ENCODE measurements at regions of chr10 and their contacts with region 1.

Region 1: DNA sequence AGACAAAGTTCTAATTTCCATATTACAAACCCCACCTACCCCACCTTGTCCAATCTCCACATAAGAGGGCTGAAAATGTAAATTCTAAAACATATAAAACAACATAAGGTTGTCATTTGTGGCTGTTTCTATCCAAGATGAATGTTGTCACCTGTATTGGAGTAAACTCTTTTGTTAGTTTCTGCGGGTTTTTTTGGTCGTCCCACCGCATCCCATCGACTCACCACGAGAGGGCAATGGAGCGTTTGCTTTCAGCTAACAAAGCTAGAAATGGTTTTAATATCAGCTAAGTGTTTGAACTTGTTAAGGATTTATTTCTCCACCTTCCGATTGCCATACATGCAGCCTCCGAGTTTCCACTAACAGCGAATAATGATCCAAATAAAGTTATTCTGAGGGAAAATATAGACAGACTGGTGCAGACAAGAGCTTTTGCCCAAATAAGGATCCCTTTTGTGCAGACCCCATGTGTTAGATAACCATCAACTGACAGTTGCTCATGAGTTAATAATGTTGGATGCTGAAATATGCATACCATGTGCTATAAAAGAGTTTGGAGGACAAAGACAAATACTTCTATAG is 137.2 kb downstream of the ARID5B start:
- DNase-seq: peak in 1 of 2 donors; percentile 85
- H3K4me3 ChIP-seq: peak overlapping the region; percentile 14 to 25
- H3K27ac ChIP-seq: peak overlapping the region; percentile 84 to 90
- H3K4me1 ChIP-seq: peaks cover 12 to 46% of the 10 kb centered on the region in 2 donors
- H3K27me3 ChIP-seq: no peaks in the 10 kb centered on the region
- CTCF ChIP-seq: peak; percentile 74 to 87 (median 81)

Region 2: DNA sequence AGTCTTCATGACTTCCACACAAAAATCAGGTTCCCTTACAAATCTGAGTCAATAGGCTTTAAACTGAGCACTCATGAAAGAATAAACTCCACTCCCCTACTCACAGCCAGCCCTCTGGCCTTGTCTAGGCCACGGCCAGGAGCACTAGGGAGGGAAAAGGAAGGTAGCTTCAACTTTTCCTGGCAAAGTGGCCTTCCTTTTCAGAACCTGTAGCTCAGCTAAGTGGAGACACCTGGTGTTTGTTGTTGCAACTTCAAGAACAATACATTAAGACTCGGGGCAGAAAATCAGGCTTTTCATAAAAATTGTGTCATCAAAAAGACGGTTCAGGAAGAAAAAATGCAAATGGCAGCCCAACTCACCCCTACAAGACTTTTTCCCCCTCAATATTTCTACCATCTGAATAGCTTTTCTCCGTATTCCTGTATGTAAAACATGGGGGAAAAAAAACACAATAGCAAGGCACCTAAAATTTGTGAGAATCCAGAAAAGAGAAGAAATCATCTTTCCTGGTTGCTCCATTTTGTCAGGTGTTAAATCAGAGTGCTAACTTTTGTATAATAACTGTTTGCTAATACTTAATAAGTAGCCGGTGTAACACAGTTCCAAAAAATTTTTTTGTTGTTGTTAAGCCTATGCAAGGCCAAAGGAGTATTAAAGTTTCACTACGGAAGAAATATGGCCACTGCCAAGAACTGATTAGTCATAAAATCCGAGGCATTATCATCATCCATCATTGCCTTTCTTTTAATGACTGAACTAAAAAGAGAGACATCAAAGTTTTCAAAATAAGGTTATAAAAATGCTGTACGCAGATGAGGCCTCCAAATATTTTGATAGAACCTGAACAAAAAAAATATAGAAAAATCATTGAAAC is 203.4 kb before region 1 on chr10:
- intact Hi-C with region 1: loop called (anchors 10 kb)
- DNase-seq: no peak
- H3K4me3 ChIP-seq: no peak overlapping the region
- H3K27ac ChIP-seq: peak overlapping the region; percentile 45 to 71
- H3K4me1 ChIP-seq: peaks cover 3 to 19% of the 10 kb centered on the region in 2 donors
- H3K27me3 ChIP-seq: no peaks in the 10 kb centered on the region
- CTCF ChIP-seq: peak in 1 of 3 experiments; percentile 41

Region 3: DNA sequence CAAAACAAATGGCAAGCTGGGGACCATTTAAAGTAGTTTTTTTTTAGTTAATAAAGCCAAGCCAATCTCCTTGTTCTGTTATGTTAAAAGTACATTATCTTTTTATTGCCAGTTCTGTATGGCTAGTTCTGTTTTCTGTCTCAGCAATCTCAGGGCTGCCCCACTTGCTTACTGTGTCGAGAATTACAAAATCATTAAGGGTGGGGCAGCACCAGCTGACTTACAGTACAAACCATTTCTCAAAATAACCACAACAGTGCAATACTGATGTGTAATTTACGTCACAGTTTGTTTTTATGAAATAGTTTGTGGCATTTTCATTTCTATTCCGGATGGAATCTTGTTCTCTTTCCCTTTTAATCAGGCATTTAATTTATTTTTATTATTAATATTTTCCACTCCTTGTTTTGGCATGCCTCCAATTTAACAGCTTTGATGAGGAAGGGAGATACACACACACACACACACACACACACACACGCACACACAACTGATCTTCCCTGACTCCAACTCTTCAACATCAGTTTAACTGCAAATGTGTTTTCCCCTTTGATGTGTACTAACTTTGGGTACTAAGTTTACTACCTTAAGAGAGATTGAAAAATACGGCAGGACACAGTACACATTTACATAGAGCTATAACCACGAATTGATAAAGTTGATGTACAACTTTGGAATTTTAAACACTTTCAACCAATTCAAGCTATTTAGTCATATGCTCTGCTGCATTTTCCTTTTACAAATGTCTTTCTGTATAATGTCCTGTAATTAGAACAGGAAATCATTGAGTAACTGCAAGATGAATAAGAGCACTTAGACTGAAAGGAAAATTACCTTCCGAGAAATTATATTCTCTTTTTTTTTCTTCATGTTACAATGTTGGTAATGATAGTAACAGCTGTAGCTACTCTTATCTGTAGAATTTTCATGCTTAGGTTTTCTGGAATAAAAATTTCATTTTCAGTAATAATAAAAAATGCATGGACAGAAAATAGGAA is 45.7 kb before region 1 on chr10:
- intact Hi-C with region 1: loop called (anchors 5 kb)
- DNase-seq: peak; percentile 48 to 88
- H3K4me3 ChIP-seq: peak overlapping the region; percentile 34 to 40
- H3K27ac ChIP-seq: peak overlapping the region; percentile 73 to 87
- H3K4me1 ChIP-seq: peaks cover 3 to 54% of the 10 kb centered on the region in 2 donors
- H3K27me3 ChIP-seq: no peaks in the 10 kb centered on the region
- CTCF ChIP-seq: no peak

Region 4: GRCh38 chr10:62019013-62019684 is 19.6 kb before region 1 on chr10:
- intact Hi-C with region 1: loop called (anchors 2 kb)
- DNase-seq: no peak
- H3K4me3 ChIP-seq: peak overlapping the region; percentile 12 to 33
- H3K27ac ChIP-seq: peak overlapping the region; percentile 88 to 91
- H3K4me1 ChIP-seq: peaks cover 16 to 42% of the 10 kb centered on the region in 2 donors
- H3K27me3 ChIP-seq: no peaks in the 10 kb centered on the region
- CTCF ChIP-seq: no peak

Region 5: GRCh38 chr10:62109587-62110293 is 71.0 kb after region 1 on chr10:
- intact Hi-C with region 1: no loop called
- DNase-seq: no peak
- H3K4me3 ChIP-seq: no peak overlapping the region
- H3K27ac ChIP-seq: no peak overlapping the region
- H3K4me1 ChIP-seq: no peaks in the 10 kb centered on the region
- H3K27me3 ChIP-seq: no peaks in the 10 kb centered on the region
- CTCF ChIP-seq: no peak

Region 6: GRCh38 chr10:62244780-62245467 is 206.2 kb after region 1 on chr10:
- intact Hi-C with region 1: loop called (anchors 1 kb)
- DNase-seq: peak in 1 of 2 donors; percentile 70
- H3K4me3 ChIP-seq: no peak overlapping the region
- H3K27ac ChIP-seq: no peak overlapping the region
- H3K4me1 ChIP-seq: peaks cover 0 to 8% of the 10 kb centered on the region in 2 donors
- H3K27me3 ChIP-seq: no peaks in the 10 kb centered on the region
- CTCF ChIP-seq: peak; percentile 69 to 83 (median 77)

Measured in ascending aorta (tissue), 2 donors.